GM12878 (cell line): ENCODE measurements at regions of chr13 and their contacts with region 1.

Region 1: DNA sequence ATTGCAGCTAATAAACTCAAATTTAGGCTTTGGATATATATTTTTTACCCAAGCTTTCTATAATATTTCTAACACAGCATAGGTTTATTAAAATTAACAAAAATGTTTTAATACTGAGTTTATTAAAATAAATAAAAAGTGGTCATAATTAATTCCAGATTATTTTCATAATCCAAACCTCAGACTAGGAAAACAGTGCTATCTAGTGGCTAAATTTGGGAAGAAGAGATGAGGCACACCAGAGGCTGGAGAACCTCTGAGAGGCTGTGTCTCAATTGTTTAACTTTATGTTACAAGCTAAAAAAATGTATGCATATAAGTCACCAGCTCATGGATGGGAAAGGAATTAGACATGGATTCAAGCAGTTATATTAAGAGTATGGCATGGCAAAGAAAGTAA is 392.5 kb downstream of the DIAPH3 start:
- DNase-seq: no peak
- ATAC-seq: no peak
- H3K4me3 ChIP-seq: no peak overlapping the region
- H3K27ac ChIP-seq: no peak overlapping the region
- H3K4me1 ChIP-seq: no peaks in the 10 kb centered on the region
- H3K27me3 ChIP-seq: no peaks in the 10 kb centered on the region
- CTCF ChIP-seq: peak; percentile 39 to 54 (median 44); a peak in 5 of 6 replicates
- EP300 ChIP-seq: no peak
- POLR2A ChIP-seq: no peak
- RAD21 ChIP-seq: peak; percentile 61

Region 2: GRCh38 chr13:59477011-59477410 is 294.3 kb before region 1 on chr13:
- CTCF ChIA-PET with region 1: no interaction called
- POLR2A ChIA-PET with region 1: no interaction called
- RAD21 ChIA-PET with region 1: no interaction called
- SMC1A ChIA-PET with region 1: no interaction called
- in situ Hi-C with region 1: no loop called
- intact Hi-C with region 1: loop called (anchors 10 kb)
- DNase-seq: no peak
- ATAC-seq: peak; percentile 54; the same call in 1 of the 3 replicates
- H3K4me3 ChIP-seq: no peak overlapping the region
- H3K27ac ChIP-seq: no peak overlapping the region
- H3K4me1 ChIP-seq: no peaks in the 10 kb centered on the region
- H3K27me3 ChIP-seq: no peaks in the 10 kb centered on the region
- CTCF ChIP-seq: peak in 2 of 3 experiments; percentile 35 to 49; a peak in 3 of 6 replicates
- EP300 ChIP-seq: no peak
- POLR2A ChIP-seq: no peak
- RAD21 ChIP-seq: no peak

Region 3: GRCh38 chr13:59623206-59623915 is 147.9 kb before region 1 on chr13:
- CTCF ChIA-PET with region 1: no interaction called
- POLR2A ChIA-PET with region 1: no interaction called
- RAD21 ChIA-PET with region 1: no interaction called
- SMC1A ChIA-PET with region 1: no interaction called
- in situ Hi-C with region 1: no loop called
- intact Hi-C with region 1: no loop called
- DNase-seq: no peak
- ATAC-seq: no peak
- H3K4me3 ChIP-seq: no peak overlapping the region
- H3K27ac ChIP-seq: no peak overlapping the region
- H3K4me1 ChIP-seq: no peaks in the 10 kb centered on the region
- H3K27me3 ChIP-seq: no peaks in the 10 kb centered on the region
- CTCF ChIP-seq: no peak
- EP300 ChIP-seq: no peak
- POLR2A ChIP-seq: no peak
- RAD21 ChIP-seq: no peak

Region 4: DNA sequence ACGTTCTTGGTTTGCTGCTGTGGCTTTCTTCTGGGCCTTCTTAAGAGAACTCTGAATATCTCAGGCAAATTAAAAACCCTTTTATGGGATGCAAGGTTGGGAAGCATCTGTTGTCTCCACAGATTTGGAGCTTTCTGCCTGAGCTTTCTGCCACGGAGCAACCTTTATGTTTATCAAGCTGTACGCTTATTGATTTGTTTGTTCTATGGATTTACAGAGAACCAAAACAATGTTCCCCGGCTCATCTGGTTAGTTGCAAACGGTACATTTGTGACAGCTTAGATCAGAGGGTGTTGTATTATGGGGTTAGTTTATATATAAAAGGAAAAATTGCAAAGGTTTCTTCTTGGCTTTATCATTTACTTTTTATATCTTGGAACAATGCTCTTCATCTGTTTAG is 87.2 kb before region 1 on chr13:
- CTCF ChIA-PET with region 1: interaction called, 124 read pairs
- POLR2A ChIA-PET with region 1: no interaction called
- RAD21 ChIA-PET with region 1: interaction called, 48 read pairs
- SMC1A ChIA-PET with region 1: interaction called, 56 read pairs
- in situ Hi-C with region 1: no loop called
- intact Hi-C with region 1: loop called (anchors 2 kb)
- DNase-seq: no peak
- ATAC-seq: no peak
- H3K4me3 ChIP-seq: no peak overlapping the region
- H3K27ac ChIP-seq: no peak overlapping the region
- H3K4me1 ChIP-seq: no peaks in the 10 kb centered on the region
- H3K27me3 ChIP-seq: no peaks in the 10 kb centered on the region
- CTCF ChIP-seq: no peak
- EP300 ChIP-seq: no peak
- POLR2A ChIP-seq: no peak
- RAD21 ChIP-seq: no peak